ENCODE measurements at regions of chr2 and their contacts with region 1.

Region 1: DNA sequence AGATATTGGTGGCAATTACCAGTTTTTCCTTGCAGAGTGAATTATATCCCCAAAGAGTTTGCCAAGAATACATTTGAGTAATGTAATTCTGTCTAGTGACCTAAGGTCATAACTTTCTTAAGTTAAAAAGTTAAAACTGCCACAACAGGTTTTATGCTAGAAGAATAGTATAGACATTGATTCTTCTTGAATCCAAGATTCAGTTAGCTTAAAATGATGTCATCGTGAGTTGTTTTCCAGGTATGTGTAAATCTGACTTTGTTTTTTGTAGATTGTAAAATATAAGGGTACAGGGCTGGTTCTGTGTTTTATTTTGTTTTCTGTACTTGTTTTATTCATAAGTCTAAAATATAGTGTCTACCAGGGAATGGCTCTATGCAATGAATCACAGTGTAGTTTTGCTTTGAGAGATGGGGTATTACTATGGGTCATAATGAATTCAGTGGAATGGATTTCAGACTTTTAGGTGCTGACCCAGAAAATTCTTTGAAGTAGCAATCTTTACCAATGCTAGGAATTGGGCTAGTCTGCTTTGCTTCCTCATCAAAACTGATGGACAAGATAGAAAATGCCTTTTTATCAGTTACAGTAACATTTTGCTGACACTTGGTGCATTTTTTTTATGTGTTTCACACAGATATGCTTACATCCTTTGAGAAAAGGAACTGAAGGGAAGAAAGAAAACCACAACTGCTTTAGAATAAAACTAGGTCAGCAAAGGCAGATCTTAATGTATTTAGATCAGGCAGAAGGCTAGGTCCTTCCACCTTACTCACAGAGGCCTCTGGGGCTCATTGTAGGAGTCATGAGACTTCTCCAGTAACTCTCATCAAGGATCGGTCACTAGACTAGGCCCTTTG is 20.8 kb upstream of the MGAT5 start:
- DNase-seq: peak in 2 of 9 experiments; percentile 47 to 68
- ATAC-seq: peak; percentile 71
- H3K4me3 ChIP-seq: peak overlapping the region in 1 of 2 experiments; percentile 3
- H3K4me3 Mint-ChIP-seq: peak overlapping the region; percentile 67
- H3K27ac ChIP-seq: peak overlapping the region; percentile 19 to 73
- H3K27ac Mint-ChIP-seq: peak overlapping the region; percentile 92
- H3K4me1 ChIP-seq: peaks cover 58% of the 10 kb centered on the region
- H3K4me1 Mint-ChIP-seq: peaks cover 80% of the 10 kb centered on the region
- H3K27me3 ChIP-seq: no peaks in the 10 kb centered on the region
- H3K27me3 Mint-ChIP-seq: no peaks in the 10 kb centered on the region
- CTCF ChIP-seq: peak; percentile 24

Region 2: DNA sequence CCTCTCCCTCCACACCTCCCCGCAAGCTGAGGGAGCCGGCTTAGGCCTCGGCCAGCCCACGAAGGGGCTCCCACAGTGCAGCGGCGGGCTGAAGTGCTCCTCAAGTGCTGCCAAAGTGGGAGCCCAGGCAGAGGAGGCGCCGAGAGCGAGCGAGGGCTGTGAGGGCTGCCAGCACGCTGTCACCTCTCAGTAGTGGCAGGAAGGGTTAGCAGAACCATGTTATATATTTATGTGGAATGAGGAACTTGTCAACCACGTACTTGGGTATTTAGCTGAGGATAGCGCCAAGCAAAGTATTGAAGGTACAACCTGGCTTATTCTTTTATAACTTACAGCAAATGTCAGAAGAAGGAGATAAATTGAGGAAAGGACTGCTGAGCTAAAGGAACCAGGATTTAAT is 123.4 kb before region 1 on chr2:
- CTCF ChIA-PET with region 1: no interaction called
- POLR2A ChIA-PET with region 1: no interaction called
- intact Hi-C with region 1: no loop called
- DNase-seq: no peak
- ATAC-seq: no peak
- H3K4me3 ChIP-seq: no peak overlapping the region
- H3K4me3 Mint-ChIP-seq: no peak overlapping the region
- H3K27ac ChIP-seq: no peak overlapping the region
- H3K27ac Mint-ChIP-seq: no peak overlapping the region
- H3K4me1 ChIP-seq: peaks cover 1% of the 10 kb centered on the region
- H3K4me1 Mint-ChIP-seq: peaks cover 3% of the 10 kb centered on the region
- H3K27me3 ChIP-seq: no peaks in the 10 kb centered on the region
- H3K27me3 Mint-ChIP-seq: no peaks in the 10 kb centered on the region
- CTCF ChIP-seq: no peak

Region 3: DNA sequence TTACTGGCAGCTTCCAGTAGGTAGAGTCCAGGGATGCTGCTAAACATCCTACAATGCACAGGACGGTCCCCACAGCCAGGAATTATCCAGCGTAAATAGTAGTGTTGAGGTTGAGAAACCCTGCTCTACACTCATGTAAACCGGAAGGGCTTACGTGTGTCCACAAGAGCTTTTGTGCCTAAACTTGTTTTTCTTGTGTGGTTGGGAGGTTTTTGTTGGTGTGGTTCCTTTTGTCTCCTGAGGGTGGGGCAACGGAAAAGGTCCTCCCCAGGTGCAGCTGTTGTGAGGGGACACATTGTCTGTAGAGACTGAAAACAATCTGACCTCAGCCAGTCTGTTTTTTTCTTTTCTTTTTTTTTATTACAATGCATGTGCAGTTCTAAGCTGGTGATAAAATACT is 51.9 kb before region 1 on chr2:
- CTCF ChIA-PET with region 1: no interaction called
- POLR2A ChIA-PET with region 1: interaction called, 3 read pairs
- intact Hi-C with region 1: loop called in 1 of 2 experiments (anchors 5 kb)
- DNase-seq: peak; percentile 19 to 83 (median 58)
- ATAC-seq: peak; percentile 82
- H3K4me3 ChIP-seq: no peak overlapping the region
- H3K4me3 Mint-ChIP-seq: peak overlapping the region; percentile 49
- H3K27ac ChIP-seq: peak overlapping the region; percentile 17 to 55
- H3K27ac Mint-ChIP-seq: peak overlapping the region; percentile 88
- H3K4me1 ChIP-seq: peaks cover 70% of the 10 kb centered on the region
- H3K4me1 Mint-ChIP-seq: peaks cover 91% of the 10 kb centered on the region
- H3K27me3 ChIP-seq: no peaks in the 10 kb centered on the region
- H3K27me3 Mint-ChIP-seq: no peaks in the 10 kb centered on the region
- CTCF ChIP-seq: no peak

Region 4: GRCh38 chr2:134218930-134219658 is 14.0 kb before region 1 on chr2:
- CTCF ChIA-PET with region 1: interaction called, 4 read pairs
- POLR2A ChIA-PET with region 1: interaction called, 5 read pairs
- intact Hi-C with region 1: loop called in 1 of 2 experiments (anchors 1 kb)
- DNase-seq: peak in 8 of 9 experiments; percentile 14 to 70 (median 56)
- ATAC-seq: peak; percentile 51
- H3K4me3 ChIP-seq: peak overlapping the region in 1 of 2 experiments; percentile 18
- H3K4me3 Mint-ChIP-seq: peak overlapping the region; percentile 72
- H3K27ac ChIP-seq: peak overlapping the region in 1 of 2 experiments; percentile 58
- H3K27ac Mint-ChIP-seq: peak overlapping the region; percentile 93
- H3K4me1 ChIP-seq: peaks cover 45% of the 10 kb centered on the region
- H3K4me1 Mint-ChIP-seq: peaks cover 68% of the 10 kb centered on the region
- H3K27me3 ChIP-seq: no peaks in the 10 kb centered on the region
- H3K27me3 Mint-ChIP-seq: no peaks in the 10 kb centered on the region
- CTCF ChIP-seq: no peak

Region 5: GRCh38 chr2:134790487-134790886 is 557.4 kb after region 1 on chr2:
- CTCF ChIA-PET with region 1: no interaction called
- POLR2A ChIA-PET with region 1: no interaction called
- intact Hi-C with region 1: no loop called
- DNase-seq: no peak
- ATAC-seq: no peak
- H3K4me3 ChIP-seq: no peak overlapping the region
- H3K4me3 Mint-ChIP-seq: no peak overlapping the region
- H3K27ac ChIP-seq: no peak overlapping the region
- H3K27ac Mint-ChIP-seq: no peak overlapping the region
- H3K4me1 ChIP-seq: no peaks in the 10 kb centered on the region
- H3K4me1 Mint-ChIP-seq: no peaks in the 10 kb centered on the region
- H3K27me3 ChIP-seq: no peaks in the 10 kb centered on the region
- H3K27me3 Mint-ChIP-seq: peaks cover 4% of the 10 kb centered on the region
- CTCF ChIP-seq: no peak